PC-9 (cell line): ENCODE measurements at regions of chr20 and their contacts with region 1.

Region 1: GRCh38 chr20:46293084-46293483 is 15.2 kb downstream of the CDH22 start:
- DNase-seq: peak in 1 of 2 experiments; percentile 61
- H3K4me3 ChIP-seq: no peak overlapping the region
- H3K27ac ChIP-seq: no peak overlapping the region
- H3K4me1 ChIP-seq: no peaks in the 10 kb centered on the region
- H3K27me3 ChIP-seq: peaks cover 99% of the 10 kb centered on the region
- CTCF ChIP-seq: no peak

Region 2: GRCh38 chr20:46255429-46256104 is 37.5 kb before region 1 on chr20:
- CTCF ChIA-PET with region 1: no interaction called
- POLR2A ChIA-PET with region 1: no interaction called
- intact Hi-C with region 1: no loop called
- DNase-seq: peak; percentile 66 to 94
- H3K4me3 ChIP-seq: no peak overlapping the region
- H3K27ac ChIP-seq: no peak overlapping the region
- H3K4me1 ChIP-seq: no peaks in the 10 kb centered on the region
- H3K27me3 ChIP-seq: peaks cover 79% of the 10 kb centered on the region
- CTCF ChIP-seq: no peak

Region 3: GRCh38 chr20:46333161-46333991 is 40.3 kb after region 1 on chr20:
- CTCF ChIA-PET with region 1: interaction called, 14 read pairs
- POLR2A ChIA-PET with region 1: no interaction called
- intact Hi-C with region 1: no loop called
- DNase-seq: no peak
- H3K4me3 ChIP-seq: no peak overlapping the region
- H3K27ac ChIP-seq: no peak overlapping the region
- H3K4me1 ChIP-seq: no peaks in the 10 kb centered on the region
- H3K27me3 ChIP-seq: peaks cover 96% of the 10 kb centered on the region
- CTCF ChIP-seq: no peak